ENCODE measurements at regions of chr1 and their contacts with region 1.

Region 1: DNA sequence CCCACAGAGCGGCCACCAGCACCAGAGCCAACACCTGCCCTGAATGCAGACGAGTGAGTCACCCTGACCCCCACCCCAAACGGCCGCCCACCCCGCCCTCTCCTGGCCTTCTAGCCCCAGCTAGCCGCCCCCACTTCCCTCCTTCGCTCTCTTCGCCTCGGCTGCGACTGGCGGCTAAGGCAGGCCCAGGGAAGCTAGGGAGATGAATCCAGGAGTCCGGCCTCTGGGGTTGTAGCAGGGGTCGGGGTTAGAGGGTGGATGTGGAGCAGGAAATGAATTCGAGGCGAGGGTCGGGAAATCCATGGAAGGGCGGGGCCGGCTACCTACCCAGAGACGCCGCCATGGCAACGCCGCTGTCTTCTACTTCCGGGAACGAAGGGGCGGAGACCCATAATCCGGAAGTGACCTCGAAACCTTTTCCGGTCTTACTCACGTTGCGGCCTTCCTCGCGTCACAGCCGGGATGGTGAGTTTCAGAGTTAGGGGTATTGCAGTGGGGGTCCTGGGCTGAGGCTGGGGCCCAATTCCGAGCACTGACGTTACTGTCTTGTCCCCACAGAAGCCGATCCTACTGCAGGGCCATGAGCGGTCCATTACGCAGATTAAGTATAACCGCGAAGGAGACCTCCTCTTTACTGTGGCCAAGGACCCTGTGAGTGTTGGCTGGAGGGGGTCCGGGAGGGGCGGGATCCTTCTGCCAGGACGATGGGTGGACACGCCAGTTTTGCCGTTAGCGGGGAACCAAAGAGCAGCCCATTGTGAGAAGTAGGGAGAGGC is at the starts of genes EIF3I and TMEM234:
- DNase-seq: peak; percentile 90
- H3K4me3 ChIP-seq: peak within 1 kb of the TSS; percentile 79 to 81 (median 80)
- H3K27ac ChIP-seq: peak within 1 kb of the TSS; percentile 98
- H3K4me1 ChIP-seq: peaks cover 26% of the 10 kb centered on the region
- H3K27me3 ChIP-seq: no peaks in the 10 kb centered on the region
- CTCF ChIP-seq: no peak
- POLR2A ChIP-seq: peak; percentile 87
- total RNA-seq, gene EIF3I: 186 and 203 TPM in 2 replicates
- total RNA-seq, gene TMEM234: 15.7 and 20.7 TPM in 2 replicates

Region 2: GRCh38 chr1:32240140-32240951 is 18.2 kb after region 1 on chr1:
- CTCF ChIA-PET with region 1: interaction called, 10 read pairs
- POLR2A ChIA-PET with region 1: no interaction called
- dilution Hi-C with region 1: no loop called
- intact Hi-C with region 1: loop called (anchors 2 kb)
- DNase-seq: peak; percentile 35
- H3K4me3 ChIP-seq: peak overlapping the region; percentile 50 to 81 (median 76)
- H3K27ac ChIP-seq: peak overlapping the region; percentile 70
- H3K4me1 ChIP-seq: peaks cover 32% of the 10 kb centered on the region
- H3K27me3 ChIP-seq: no peaks in the 10 kb centered on the region
- CTCF ChIP-seq: peak in 1 of 2 donors; percentile 36
- POLR2A ChIP-seq: peak; percentile 58

Region 3: DNA sequence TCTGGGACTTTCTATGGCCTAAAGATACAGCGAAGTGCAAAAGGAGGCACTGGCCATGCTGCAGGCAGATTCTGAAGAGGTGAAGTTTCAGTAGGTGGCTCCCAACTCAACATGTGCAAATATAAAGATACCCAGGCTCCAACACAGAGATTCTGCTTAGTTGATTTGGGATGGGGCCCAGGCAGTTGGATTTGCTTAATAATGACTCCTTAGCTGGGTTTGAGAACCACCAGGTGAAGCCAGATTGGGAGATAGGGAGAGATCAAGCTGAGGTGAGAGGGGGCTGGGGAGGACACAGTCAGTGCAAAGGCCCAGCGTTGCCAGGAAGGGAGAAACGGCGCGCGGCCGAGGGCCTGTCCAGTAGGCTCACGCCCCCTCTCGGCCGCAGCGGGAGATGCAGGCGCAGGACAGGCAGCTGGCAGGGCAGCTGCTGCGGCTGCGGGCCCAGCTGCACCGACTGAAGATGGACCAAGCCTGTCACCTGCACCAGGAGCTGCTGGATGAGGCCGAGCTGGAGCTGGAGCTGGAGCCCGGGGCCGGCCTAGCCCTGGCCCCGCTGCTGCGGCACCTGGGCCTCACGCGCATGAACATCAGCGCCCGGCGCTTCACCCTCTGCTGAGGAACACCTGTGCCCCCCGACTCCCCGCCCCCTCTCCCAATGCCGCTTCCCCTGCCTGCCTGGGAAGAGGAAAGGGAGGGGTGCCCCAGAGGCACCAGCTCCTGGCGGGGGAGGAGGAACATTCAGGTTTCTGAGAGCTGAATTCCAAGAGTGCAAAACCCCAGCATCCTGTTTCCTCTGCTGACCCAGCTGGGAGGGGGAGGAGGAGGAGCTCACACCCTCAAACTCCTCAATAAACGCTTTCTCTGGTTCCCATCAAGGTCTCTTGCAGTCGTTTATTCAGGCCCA is 26.1 kb after region 1 on chr1:
- CTCF ChIA-PET with region 1: interaction called, 47 read pairs
- POLR2A ChIA-PET with region 1: interaction called, 5 read pairs
- dilution Hi-C with region 1: no loop called
- intact Hi-C with region 1: loop called (anchors 1 kb)
- DNase-seq: peak; percentile 74
- H3K4me3 ChIP-seq: peak overlapping the region in 1 of 3 experiments; percentile 29
- H3K27ac ChIP-seq: peak overlapping the region; percentile 60
- H3K4me1 ChIP-seq: peaks cover 47% of the 10 kb centered on the region
- H3K27me3 ChIP-seq: no peaks in the 10 kb centered on the region
- CTCF ChIP-seq: peak; percentile 96 to 98
- POLR2A ChIP-seq: no peak

Region 4: GRCh38 chr1:32266921-32267591 is 44.9 kb after region 1 on chr1:
- CTCF ChIA-PET with region 1: no interaction called
- POLR2A ChIA-PET with region 1: no interaction called
- dilution Hi-C with region 1: no loop called
- intact Hi-C with region 1: loop called (anchors 1 kb)
- DNase-seq: peak; percentile 95
- H3K4me3 ChIP-seq: peak overlapping the region in 1 of 3 experiments; percentile 15
- H3K27ac ChIP-seq: peak overlapping the region; percentile 83
- H3K4me1 ChIP-seq: peaks cover 5% of the 10 kb centered on the region
- H3K27me3 ChIP-seq: no peaks in the 10 kb centered on the region
- CTCF ChIP-seq: no peak
- POLR2A ChIP-seq: no peak

Region 5: GRCh38 chr1:32321712-32322291 is 99.6 kb after region 1 on chr1:
- CTCF ChIA-PET with region 1: interaction called, 78 read pairs
- POLR2A ChIA-PET with region 1: interaction called, 4 read pairs
- dilution Hi-C with region 1: no loop called
- intact Hi-C with region 1: no loop called
- DNase-seq: no peak
- H3K4me3 ChIP-seq: no peak overlapping the region
- H3K27ac ChIP-seq: no peak overlapping the region
- H3K4me1 ChIP-seq: peaks cover 6% of the 10 kb centered on the region
- H3K27me3 ChIP-seq: no peaks in the 10 kb centered on the region
- CTCF ChIP-seq: no peak
- POLR2A ChIP-seq: no peak

Region 6: GRCh38 chr1:32413507-32414185 is 191.5 kb after region 1 on chr1:
- CTCF ChIA-PET with region 1: interaction called, 33 read pairs
- POLR2A ChIA-PET with region 1: interaction called, 3 read pairs
- dilution Hi-C with region 1: no loop called
- intact Hi-C with region 1: loop called (anchors 2 kb)
- DNase-seq: peak; percentile 63
- H3K4me3 ChIP-seq: no peak overlapping the region
- H3K27ac ChIP-seq: no peak overlapping the region
- H3K4me1 ChIP-seq: no peaks in the 10 kb centered on the region
- H3K27me3 ChIP-seq: peaks cover 9 to 10% of the 10 kb centered on the region in 2 experiments
- CTCF ChIP-seq: peak; percentile 72 to 83
- POLR2A ChIP-seq: no peak

Measured in endothelial cell of umbilical vein (primary cell).